Testis (tissue), 5 donors: ENCODE measurements at regions of chr10 and their contacts with region 1.

Region 1: GRCh38 chr10:103859161-103860086 is 4.0 kb upstream of the SH3PXD2A start:
- DNase-seq: peak; percentile 79
- H3K4me3 ChIP-seq: no peak overlapping the region
- H3K27ac ChIP-seq: peak overlapping the region in 1 of 2 donors; percentile 7
- H3K4me1 ChIP-seq: peaks cover 6% of the 10 kb centered on the region
- H3K27me3 ChIP-seq: no peaks in the 10 kb centered on the region
- CTCF ChIP-seq: peak; percentile 63 to 71 (median 71)
- POLR2A ChIP-seq: no peak

Region 2: DNA sequence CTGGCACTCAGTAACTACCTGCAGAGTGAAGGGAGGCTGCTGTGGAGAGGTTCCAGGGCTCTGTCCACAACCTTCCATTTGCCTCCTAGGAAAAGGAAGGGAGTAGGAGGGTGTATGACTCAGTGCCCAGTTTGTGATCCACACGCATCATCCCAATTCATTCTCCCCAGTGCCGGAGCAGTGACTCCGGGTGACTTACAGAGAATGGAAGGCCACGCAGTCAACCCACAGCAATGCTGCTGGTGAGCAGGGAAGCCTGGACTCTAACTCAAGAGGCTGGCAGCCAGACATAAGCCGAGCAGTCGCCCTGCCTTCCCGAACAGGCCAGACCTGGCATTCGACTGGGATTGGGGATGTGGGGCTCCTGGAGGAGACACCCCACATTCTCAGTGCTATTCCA is 144.0 kb before region 1 on chr10:
- intact Hi-C with region 1: loop called (anchors 5 kb)
- DNase-seq: no peak
- H3K4me3 ChIP-seq: no peak overlapping the region
- H3K27ac ChIP-seq: no peak overlapping the region
- H3K4me1 ChIP-seq: peaks cover 4% of the 10 kb centered on the region
- H3K27me3 ChIP-seq: no peaks in the 10 kb centered on the region
- CTCF ChIP-seq: no peak
- POLR2A ChIP-seq: no peak

Region 3: DNA sequence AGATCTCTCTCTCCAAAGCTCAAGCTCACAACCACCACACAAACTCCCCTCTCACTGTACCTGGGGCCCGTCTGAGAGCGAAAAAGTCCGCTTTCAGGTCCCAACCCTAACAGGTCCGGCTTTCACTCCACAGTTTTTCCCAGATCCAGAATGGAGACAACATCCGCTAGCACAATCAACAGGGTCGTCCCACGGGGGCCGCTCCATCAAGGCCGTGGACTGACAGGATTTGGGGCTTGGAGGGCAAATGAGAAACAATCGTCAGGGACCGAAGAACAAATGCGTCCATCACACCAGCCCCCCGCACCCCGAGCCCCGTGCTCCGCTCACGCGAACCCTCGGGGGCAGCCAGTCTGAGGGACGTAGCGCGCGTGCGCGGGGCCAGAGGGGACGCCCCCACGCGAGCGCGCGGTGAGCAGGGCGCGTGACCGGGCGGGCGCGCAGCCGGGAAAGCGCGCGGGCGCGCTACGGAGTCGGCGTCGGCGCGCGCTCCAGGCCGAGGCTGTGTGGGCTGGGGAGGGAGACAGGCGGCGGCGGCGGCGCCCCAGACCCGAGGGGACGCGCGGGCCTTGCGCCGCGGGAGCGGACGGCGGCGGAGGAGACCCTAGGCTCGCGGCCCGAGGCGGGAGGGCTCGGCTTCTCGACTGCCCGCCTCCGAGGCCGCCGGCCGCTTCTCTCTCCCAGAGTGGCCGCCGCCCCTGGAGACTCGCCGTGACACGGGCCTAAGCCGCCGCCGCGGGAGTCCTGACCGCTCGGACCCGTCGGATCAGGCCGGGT is 107.4 kb after region 1 on chr10 and contains the start of gene SLK:
- intact Hi-C with region 1: no loop called
- DNase-seq: peak; percentile 87
- H3K4me3 ChIP-seq: peak within 1 kb of the TSS; percentile 80 to 93
- H3K27ac ChIP-seq: peak within 1 kb of the TSS; percentile 98 to 99
- H3K4me1 ChIP-seq: peaks cover 8% of the 10 kb centered on the region
- H3K27me3 ChIP-seq: no peaks in the 10 kb centered on the region
- CTCF ChIP-seq: no peak
- POLR2A ChIP-seq: peak; percentile 91
- total RNA-seq, gene SLK: 57.7 to 59.4 TPM

Region 4: GRCh38 chr10:104016661-104017060 is 157.2 kb after region 1 on chr10:
- intact Hi-C with region 1: no loop called
- DNase-seq: no peak
- H3K4me3 ChIP-seq: no peak overlapping the region
- H3K27ac ChIP-seq: no peak overlapping the region
- H3K4me1 ChIP-seq: no peaks in the 10 kb centered on the region
- H3K27me3 ChIP-seq: no peaks in the 10 kb centered on the region
- CTCF ChIP-seq: no peak
- POLR2A ChIP-seq: no peak